Caco-2 (cell line): ENCODE measurements at regions of chr6 and their contacts with region 1.

Region 1: DNA sequence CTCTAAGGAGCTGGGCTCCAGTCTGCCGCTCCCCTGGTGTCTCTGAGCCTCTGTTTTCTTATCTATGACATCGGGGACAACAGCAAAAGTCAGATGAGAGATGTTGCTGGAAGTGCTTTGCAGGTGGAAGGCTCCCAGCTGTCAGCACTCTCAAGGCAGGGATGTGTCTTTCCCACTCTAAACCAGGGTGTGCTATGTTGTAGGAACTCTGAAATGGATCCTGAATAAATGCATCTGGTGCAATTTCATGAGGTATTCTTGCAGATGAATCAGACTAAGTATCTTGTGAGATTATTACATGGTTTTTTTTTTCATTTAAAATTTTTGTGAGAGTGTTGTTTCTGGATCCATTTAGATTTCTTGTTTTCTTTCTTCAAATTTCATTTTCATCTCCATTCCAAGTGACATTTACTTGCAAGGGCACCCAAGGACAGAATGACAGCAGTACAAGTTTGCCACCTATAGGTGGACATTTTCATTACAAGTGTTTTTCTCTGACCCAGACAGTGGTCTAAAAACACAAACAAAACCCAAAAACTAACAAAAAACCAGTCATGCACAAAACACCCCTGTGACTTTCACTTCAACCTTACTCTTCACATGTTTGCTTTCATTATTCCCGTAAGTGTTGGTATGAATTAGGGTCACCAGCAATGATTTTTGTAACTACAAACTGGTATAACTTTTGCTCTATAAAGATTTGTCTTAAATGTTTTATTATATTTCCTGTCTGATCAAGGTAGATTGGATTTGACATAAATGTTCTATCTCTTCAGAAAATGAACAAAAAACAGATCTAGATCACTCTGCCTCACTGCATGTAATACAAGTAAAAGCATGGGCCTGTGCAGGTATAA is 14.7 kb upstream of the SIM1 start:
- DNase-seq: peak in 1 of 2 experiments; percentile 55
- H3K4me3 ChIP-seq: no peak overlapping the region
- H3K4me3 Mint-ChIP-seq: no peak overlapping the region
- H3K27ac Mint-ChIP-seq: no peak overlapping the region
- H3K4me1 ChIP-seq: no peaks in the 10 kb centered on the region
- H3K4me1 Mint-ChIP-seq: no peaks in the 10 kb centered on the region
- H3K27me3 ChIP-seq: no peaks in the 10 kb centered on the region
- H3K27me3 Mint-ChIP-seq: no peaks in the 10 kb centered on the region
- CTCF ChIP-seq: peak; percentile 70 to 73

Region 2: DNA sequence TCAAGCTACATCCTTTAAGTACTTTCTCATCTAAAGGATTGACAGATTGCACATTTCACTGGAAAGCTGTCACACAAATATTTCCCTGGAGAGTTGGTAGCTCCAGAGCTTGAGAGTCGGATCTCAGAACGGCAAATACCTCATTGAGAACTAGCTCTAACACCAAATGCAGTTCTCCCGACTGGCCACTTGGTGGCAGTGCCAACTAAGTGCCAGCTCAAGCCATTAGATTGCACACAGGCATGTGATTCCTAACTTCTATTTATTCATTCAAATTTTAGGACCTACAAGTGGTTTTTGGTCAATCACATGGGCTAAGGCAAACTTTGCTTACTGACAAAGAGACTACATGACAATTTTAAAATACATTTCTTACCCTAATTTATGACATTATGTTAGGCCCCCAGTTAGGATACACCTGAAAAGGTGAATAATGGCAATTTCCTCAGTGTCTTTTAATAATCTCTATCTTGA is 477.5 kb before region 1 on chr6:
- CTCF ChIA-PET with region 1: interaction called, 3 read pairs
- POLR2A ChIA-PET with region 1: no interaction called
- intact Hi-C with region 1: loop called (anchors 1 kb)
- DNase-seq: peak; percentile 41 to 45
- H3K4me3 ChIP-seq: no peak overlapping the region
- H3K4me3 Mint-ChIP-seq: no peak overlapping the region
- H3K27ac Mint-ChIP-seq: no peak overlapping the region
- H3K4me1 ChIP-seq: no peaks in the 10 kb centered on the region
- H3K4me1 Mint-ChIP-seq: no peaks in the 10 kb centered on the region
- H3K27me3 ChIP-seq: no peaks in the 10 kb centered on the region
- H3K27me3 Mint-ChIP-seq: peaks cover 8% of the 10 kb centered on the region
- CTCF ChIP-seq: peak; percentile 85 to 92

Region 3: GRCh38 chr6:100116411-100117194 is 362.8 kb before region 1 on chr6:
- CTCF ChIA-PET with region 1: interaction called, 3 read pairs
- POLR2A ChIA-PET with region 1: no interaction called
- intact Hi-C with region 1: loop called (anchors 1 kb)
- DNase-seq: peak; percentile 43 to 57
- H3K4me3 ChIP-seq: no peak overlapping the region
- H3K4me3 Mint-ChIP-seq: no peak overlapping the region
- H3K27ac Mint-ChIP-seq: no peak overlapping the region
- H3K4me1 ChIP-seq: no peaks in the 10 kb centered on the region
- H3K4me1 Mint-ChIP-seq: no peaks in the 10 kb centered on the region
- H3K27me3 ChIP-seq: no peaks in the 10 kb centered on the region
- H3K27me3 Mint-ChIP-seq: no peaks in the 10 kb centered on the region
- CTCF ChIP-seq: peak; percentile 52 to 70

Region 4: DNA sequence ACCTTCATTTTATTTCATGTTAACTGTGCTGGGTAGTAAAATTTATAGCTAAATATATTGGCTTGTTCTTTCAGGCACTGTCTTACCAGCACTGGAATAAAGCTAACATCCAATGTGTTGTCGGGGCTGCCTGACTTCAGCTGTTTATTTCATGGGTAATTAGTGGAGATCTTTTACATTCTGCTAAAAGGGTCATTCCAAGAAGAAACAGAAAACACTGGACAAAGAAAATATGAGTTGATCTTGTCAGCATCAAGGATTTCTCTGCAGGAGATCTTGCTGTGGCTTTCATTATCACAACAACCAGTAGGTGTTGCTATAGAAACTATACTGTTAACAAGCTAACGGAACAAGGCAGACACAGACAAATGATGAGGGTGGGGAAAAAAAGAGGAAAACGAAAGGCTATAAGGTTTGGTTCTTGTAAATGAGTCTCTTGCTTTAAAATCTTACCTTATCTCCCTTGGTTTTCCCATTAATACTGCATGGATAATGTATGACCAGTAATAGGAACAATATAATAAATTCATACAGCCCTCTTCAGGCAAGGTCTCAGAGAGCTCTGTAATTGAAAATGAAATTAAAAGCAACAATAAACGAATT is 221.5 kb before region 1 on chr6:
- CTCF ChIA-PET with region 1: no interaction called
- POLR2A ChIA-PET with region 1: no interaction called
- intact Hi-C with region 1: loop called (anchors 10 kb)
- DNase-seq: peak in 1 of 2 experiments; percentile 12
- H3K4me3 ChIP-seq: no peak overlapping the region
- H3K4me3 Mint-ChIP-seq: no peak overlapping the region
- H3K27ac Mint-ChIP-seq: no peak overlapping the region
- H3K4me1 ChIP-seq: no peaks in the 10 kb centered on the region
- H3K4me1 Mint-ChIP-seq: no peaks in the 10 kb centered on the region
- H3K27me3 ChIP-seq: no peaks in the 10 kb centered on the region
- H3K27me3 Mint-ChIP-seq: no peaks in the 10 kb centered on the region
- CTCF ChIP-seq: peak in 1 of 2 experiments; percentile 20

Region 5: GRCh38 chr6:100573167-100573566 is 93.8 kb after region 1 on chr6:
- CTCF ChIA-PET with region 1: no interaction called
- POLR2A ChIA-PET with region 1: no interaction called
- intact Hi-C with region 1: loop called (anchors 1 kb)
- DNase-seq: peak in 1 of 2 experiments; percentile 5
- H3K4me3 ChIP-seq: no peak overlapping the region
- H3K4me3 Mint-ChIP-seq: no peak overlapping the region
- H3K27ac Mint-ChIP-seq: no peak overlapping the region
- H3K4me1 ChIP-seq: no peaks in the 10 kb centered on the region
- H3K4me1 Mint-ChIP-seq: no peaks in the 10 kb centered on the region
- H3K27me3 ChIP-seq: no peaks in the 10 kb centered on the region
- H3K27me3 Mint-ChIP-seq: no peaks in the 10 kb centered on the region
- CTCF ChIP-seq: peak; percentile 46 to 50